ENCODE measurements at regions of chr11 and their contacts with region 1.

Region 1: GRCh38 chr11:121795174-121795573 is 320.8 kb downstream of the BLID start:
- DNase-seq: no peak
- H3K4me3 ChIP-seq: no peak overlapping the region
- H3K27ac ChIP-seq: no peak overlapping the region
- H3K4me1 ChIP-seq: no peaks in the 10 kb centered on the region
- H3K27me3 ChIP-seq: peaks cover 0 to 4% of the 10 kb centered on the region in 2 experiments
- CTCF ChIP-seq: no peak
- POLR2A ChIP-seq: no peak

Region 2: GRCh38 chr11:121749691-121750090 is 45.5 kb before region 1 on chr11:
- CTCF ChIA-PET with region 1: no interaction called
- POLR2A ChIA-PET with region 1: no interaction called
- dilution Hi-C with region 1: no loop called
- intact Hi-C with region 1: loop called (anchors 5 kb)
- DNase-seq: no peak
- H3K4me3 ChIP-seq: no peak overlapping the region
- H3K27ac ChIP-seq: no peak overlapping the region
- H3K4me1 ChIP-seq: no peaks in the 10 kb centered on the region
- H3K27me3 ChIP-seq: no peaks in the 10 kb centered on the region
- CTCF ChIP-seq: no peak
- POLR2A ChIP-seq: no peak